Dendritic cell treated with granulocyte-macrophage colony-stimulating factor and Interleukin-4, amounts not matched to agents 40 ng/mL and 50 ng/mL, for 4 days (primary cell): ENCODE measurements at regions of chr10 and their contacts with region 1.

Region 1: DNA sequence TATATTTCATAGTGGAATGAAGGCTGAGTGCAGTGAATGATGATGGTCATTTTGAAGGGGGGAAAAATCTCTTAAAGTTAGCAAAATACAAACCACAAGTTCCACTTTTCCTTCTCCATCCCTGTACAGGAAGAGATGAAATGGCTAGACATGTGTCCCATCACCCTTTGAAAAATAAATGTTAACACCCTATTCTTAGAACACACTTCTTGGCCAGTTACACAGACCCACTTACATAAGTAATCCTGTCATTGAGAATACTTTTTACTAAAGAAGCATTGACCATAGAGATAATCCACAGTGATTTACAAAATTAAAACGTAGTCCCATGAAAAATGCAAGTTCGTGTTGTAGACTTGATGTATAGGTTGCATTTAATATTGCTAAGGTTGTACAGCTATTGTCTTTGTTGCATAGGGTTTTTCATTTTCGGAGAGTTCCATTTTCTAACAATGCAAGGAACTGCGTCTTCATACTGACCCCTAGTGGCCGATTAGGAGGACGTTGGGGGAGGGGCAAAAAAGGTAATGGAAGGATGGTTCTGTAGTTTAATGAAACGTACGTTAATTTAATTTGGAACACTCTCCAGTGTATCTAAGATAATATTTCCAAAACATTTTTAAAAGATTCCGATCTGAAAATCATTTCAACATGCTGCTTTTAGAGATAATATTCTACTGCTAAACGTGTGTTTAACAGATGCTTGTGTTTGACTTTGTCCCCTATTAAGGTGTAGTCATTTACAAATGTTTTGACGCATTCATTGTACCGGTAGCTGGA is 60.9 kb downstream of the ARMC3 start:
- H3K4me3 Mint-ChIP-seq: no peak overlapping the region
- H3K27ac Mint-ChIP-seq: no peak overlapping the region
- H3K4me1 Mint-ChIP-seq: peaks cover 10% of the 10 kb centered on the region
- H3K27me3 Mint-ChIP-seq: peaks cover 16% of the 10 kb centered on the region

Region 2: GRCh38 chr10:22010973-22011408 is 977.8 kb before region 1 on chr10:
- intact Hi-C with region 1: loop called (anchors 2 kb)
- H3K4me3 Mint-ChIP-seq: no peak overlapping the region
- H3K27ac Mint-ChIP-seq: no peak overlapping the region
- H3K4me1 Mint-ChIP-seq: peaks cover 11% of the 10 kb centered on the region
- H3K27me3 Mint-ChIP-seq: no peaks in the 10 kb centered on the region

Region 3: DNA sequence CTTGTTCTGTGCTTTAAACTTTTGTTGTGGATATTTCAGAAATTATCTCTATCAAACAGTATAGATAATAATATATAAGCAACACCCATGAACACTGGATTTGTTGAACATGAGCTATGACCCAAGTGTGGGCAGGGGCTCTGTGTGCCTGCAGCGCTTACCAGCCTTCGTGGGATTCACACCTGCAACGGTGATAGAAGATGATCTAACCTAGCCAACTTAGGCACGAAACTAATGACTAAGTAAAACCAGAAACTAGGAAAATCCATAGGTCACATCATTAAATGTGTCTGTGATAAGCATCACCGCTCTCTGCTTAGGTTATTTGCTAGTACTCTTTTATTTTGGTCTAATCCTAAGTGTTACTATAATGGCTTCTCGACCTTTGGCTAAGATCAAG is 625.5 kb before region 1 on chr10:
- intact Hi-C with region 1: loop called (anchors 5 kb)
- H3K4me3 Mint-ChIP-seq: no peak overlapping the region
- H3K27ac Mint-ChIP-seq: no peak overlapping the region
- H3K4me1 Mint-ChIP-seq: no peaks in the 10 kb centered on the region
- H3K27me3 Mint-ChIP-seq: peaks cover 5% of the 10 kb centered on the region

Region 4: GRCh38 chr10:22573820-22574569 is 414.8 kb before region 1 on chr10:
- intact Hi-C with region 1: loop called (anchors 1 kb)
- H3K4me3 Mint-ChIP-seq: no peak overlapping the region
- H3K27ac Mint-ChIP-seq: no peak overlapping the region
- H3K4me1 Mint-ChIP-seq: peaks cover 11% of the 10 kb centered on the region
- H3K27me3 Mint-ChIP-seq: no peaks in the 10 kb centered on the region

Region 5: DNA sequence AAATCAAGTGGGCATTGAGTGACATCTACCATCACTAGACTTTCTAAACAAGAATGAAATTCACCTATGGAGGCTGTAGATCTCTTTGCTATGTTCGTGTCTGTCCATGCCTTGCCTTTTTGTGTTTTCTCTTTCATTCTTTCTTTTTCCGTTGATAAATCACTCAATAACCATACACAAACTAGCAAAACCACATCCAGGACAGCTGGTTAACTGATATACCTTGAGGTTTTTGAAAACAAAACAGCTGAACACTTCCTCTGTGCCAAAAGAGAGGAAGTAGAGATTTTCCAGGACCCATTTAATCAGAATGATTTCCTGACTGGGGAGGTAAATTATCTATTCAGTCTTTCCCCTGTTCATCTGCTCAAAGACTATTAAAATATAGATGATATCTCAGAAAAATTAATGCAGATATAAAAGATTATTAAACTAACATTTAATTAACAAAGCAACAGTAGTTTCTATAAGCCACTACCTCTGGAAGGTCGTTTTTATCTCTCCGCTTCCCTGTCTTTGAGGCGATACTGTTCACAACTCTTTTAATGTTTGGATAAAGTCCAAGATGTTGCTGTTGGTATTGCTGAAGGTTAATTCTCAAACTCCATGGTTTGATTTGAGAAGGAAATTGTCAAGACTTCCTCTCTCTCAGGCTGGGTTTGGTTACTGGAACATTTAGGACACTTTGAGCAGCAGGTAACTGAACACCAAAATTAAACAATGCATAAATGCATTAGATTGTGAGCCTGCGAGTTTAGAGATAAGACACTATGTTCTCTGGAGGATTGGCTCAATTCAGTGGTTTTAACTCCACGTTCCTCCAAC is 380.3 kb after region 1 on chr10:
- intact Hi-C with region 1: no loop called
- H3K4me3 Mint-ChIP-seq: no peak overlapping the region
- H3K27ac Mint-ChIP-seq: no peak overlapping the region
- H3K4me1 Mint-ChIP-seq: peaks cover 32% of the 10 kb centered on the region
- H3K27me3 Mint-ChIP-seq: peaks cover 22% of the 10 kb centered on the region